Activated B cell treated with CpG ODN at 0.5 μM for 24 hours (primary cell): ENCODE measurements at regions of chr5 and their contacts with region 1.

Region 1: GRCh38 chr5:119070828-119071572 is at the start of gene DMXL1:
- DNase-seq: peak; percentile 95
- ATAC-seq: peak; percentile 82
- H3K4me3 Mint-ChIP-seq: peak within 1 kb of the TSS; percentile 99
- H3K27ac Mint-ChIP-seq: peak within 1 kb of the TSS; percentile 98
- H3K4me1 Mint-ChIP-seq: peaks cover 48% of the 10 kb centered on the region
- H3K27me3 Mint-ChIP-seq: peaks cover 2% of the 10 kb centered on the region
- CTCF ChIP-seq: no peak
- total RNA-seq, gene DMXL1: 66.8 and 76.9 TPM in 2 replicates

Region 2: DNA sequence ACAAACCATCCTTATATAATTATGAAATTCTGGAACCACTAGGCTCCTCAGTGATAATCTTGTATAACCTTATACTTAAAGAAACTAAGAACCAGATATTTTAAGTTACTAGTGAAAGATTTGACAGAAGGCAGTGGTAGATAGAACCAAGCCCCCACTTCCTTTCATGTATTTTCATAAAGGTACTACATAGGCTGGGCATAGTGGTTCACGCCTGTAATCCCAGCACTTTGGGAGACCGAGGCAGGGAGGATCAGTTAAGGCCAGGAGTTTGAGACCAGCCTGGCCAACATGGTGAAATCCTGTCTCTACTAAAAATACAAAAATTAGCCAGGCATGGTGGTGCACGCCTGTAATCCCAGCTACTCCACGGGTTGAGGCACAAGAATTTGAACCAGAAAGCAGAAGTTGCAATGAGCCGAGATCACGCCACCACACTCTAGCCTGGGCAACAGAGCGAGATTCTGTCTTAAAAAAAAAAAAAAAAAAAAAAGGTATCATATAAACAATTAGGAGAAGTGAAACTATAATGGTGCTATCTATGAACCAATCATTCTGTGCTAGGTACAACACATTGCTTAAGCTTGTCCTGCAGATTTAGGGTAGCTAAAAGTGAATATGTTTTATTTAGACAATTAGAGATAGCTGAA is 54.8 kb before region 1 on chr5:
- CTCF ChIA-PET with region 1: interaction called, 13 read pairs
- POLR2A ChIA-PET with region 1: interaction called, 11 read pairs
- intact Hi-C with region 1: no loop called
- DNase-seq: peak; percentile 31
- ATAC-seq: peak; percentile 85
- H3K4me3 Mint-ChIP-seq: peak overlapping the region; percentile 19
- H3K27ac Mint-ChIP-seq: peak overlapping the region; percentile 91
- H3K4me1 Mint-ChIP-seq: peaks cover 57% of the 10 kb centered on the region
- H3K27me3 Mint-ChIP-seq: no peaks in the 10 kb centered on the region
- CTCF ChIP-seq: no peak

Region 3: GRCh38 chr5:119031905-119032304 is 39.1 kb before region 1 on chr5:
- CTCF ChIA-PET with region 1: no interaction called
- POLR2A ChIA-PET with region 1: interaction called, 37 read pairs
- intact Hi-C with region 1: loop called (anchors 1 kb)
- DNase-seq: no peak
- ATAC-seq: peak; percentile 87
- H3K4me3 Mint-ChIP-seq: peak overlapping the region; percentile 60
- H3K27ac Mint-ChIP-seq: peak overlapping the region; percentile 95
- H3K4me1 Mint-ChIP-seq: peaks cover 63% of the 10 kb centered on the region
- H3K27me3 Mint-ChIP-seq: no peaks in the 10 kb centered on the region
- CTCF ChIP-seq: no peak

Region 4: DNA sequence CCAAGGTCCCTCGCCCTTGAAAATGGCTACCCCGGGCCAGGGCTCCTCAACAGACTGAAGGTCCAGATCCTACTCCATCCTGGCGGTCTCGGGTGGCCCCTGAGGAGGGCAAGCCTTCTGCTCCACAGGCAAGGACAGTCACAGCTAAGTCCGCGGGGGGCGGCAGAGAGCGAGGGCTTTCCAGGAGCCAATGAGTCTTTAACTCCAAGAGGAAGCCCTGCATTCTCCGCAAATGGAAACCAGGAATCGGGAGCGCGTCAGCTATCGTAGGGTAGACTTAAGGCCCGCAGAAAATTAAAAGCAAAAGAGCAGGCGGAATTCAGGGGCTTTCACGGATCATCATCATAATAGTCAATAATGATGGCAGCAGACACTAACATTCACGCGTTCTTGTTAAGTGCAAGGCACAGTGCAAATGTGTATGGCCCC is 197.0 kb after region 1 on chr5:
- CTCF ChIA-PET with region 1: no interaction called
- POLR2A ChIA-PET with region 1: interaction called, 15 read pairs
- intact Hi-C with region 1: loop called (anchors 1 kb)
- DNase-seq: peak; percentile 62
- ATAC-seq: peak; percentile 65
- H3K4me3 Mint-ChIP-seq: peak overlapping the region; percentile 95
- H3K27ac Mint-ChIP-seq: peak overlapping the region; percentile 95
- H3K4me1 Mint-ChIP-seq: peaks cover 50% of the 10 kb centered on the region
- H3K27me3 Mint-ChIP-seq: no peaks in the 10 kb centered on the region
- CTCF ChIP-seq: no peak

Region 5: DNA sequence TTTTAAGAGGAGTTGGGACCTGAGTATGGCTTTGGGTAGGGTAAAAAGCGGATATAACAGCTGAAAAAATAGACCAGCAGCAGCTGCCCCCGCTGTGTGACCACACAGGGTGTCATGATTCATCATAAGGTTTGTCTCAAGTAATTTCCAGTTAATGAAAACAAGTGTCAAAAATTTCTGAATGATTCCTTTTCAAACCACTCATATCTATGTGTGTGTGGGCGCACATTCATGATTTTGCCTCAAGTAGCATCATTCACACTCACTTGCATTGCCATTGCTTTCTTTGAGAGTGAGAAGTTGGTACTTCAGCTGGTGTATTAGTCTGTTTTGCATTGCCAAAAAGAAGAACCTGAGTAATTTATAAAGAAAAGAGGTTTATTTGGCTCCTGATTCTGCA is 272.8 kb after region 1 on chr5:
- CTCF ChIA-PET with region 1: no interaction called
- POLR2A ChIA-PET with region 1: no interaction called
- intact Hi-C with region 1: no loop called
- DNase-seq: no peak
- ATAC-seq: peak; percentile 17
- H3K4me3 Mint-ChIP-seq: peak overlapping the region; percentile 50
- H3K27ac Mint-ChIP-seq: peak overlapping the region; percentile 92
- H3K4me1 Mint-ChIP-seq: peaks cover 95% of the 10 kb centered on the region
- H3K27me3 Mint-ChIP-seq: no peaks in the 10 kb centered on the region
- CTCF ChIP-seq: no peak

Region 6: GRCh38 chr5:119452373-119453039 is 381.5 kb after region 1 on chr5 and contains the start of gene HSD17B4:
- CTCF ChIA-PET with region 1: no interaction called
- POLR2A ChIA-PET with region 1: no interaction called
- intact Hi-C with region 1: loop called (anchors 2 kb)
- DNase-seq: peak; percentile 76
- ATAC-seq: peak; percentile 95
- H3K4me3 Mint-ChIP-seq: peak within 1 kb of the TSS; percentile 95
- H3K27ac Mint-ChIP-seq: peak within 1 kb of the TSS; percentile 95
- H3K4me1 Mint-ChIP-seq: peaks cover 53% of the 10 kb centered on the region
- H3K27me3 Mint-ChIP-seq: no peaks in the 10 kb centered on the region
- CTCF ChIP-seq: no peak
- total RNA-seq, gene HSD17B4: 106 and 130 TPM in 2 replicates